ENCODE measurements at regions of chr2 and their contacts with region 1.

Region 1: GRCh38 chr2:165889158-165889557 is 64.4 kb downstream of the TTC21B start:
- DNase-seq: no peak
- ATAC-seq: no peak
- H3K4me3 ChIP-seq: no peak overlapping the region
- H3K27ac ChIP-seq: no peak overlapping the region
- H3K4me1 ChIP-seq: no peaks in the 10 kb centered on the region
- H3K27me3 ChIP-seq: no peaks in the 10 kb centered on the region
- CTCF ChIP-seq: no peak

Region 2: GRCh38 chr2:165933211-165933610 is 44.1 kb after region 1 on chr2:
- intact Hi-C with region 1: loop called (anchors 5 to 10 kb)
- DNase-seq: no peak
- ATAC-seq: no peak
- H3K4me3 ChIP-seq: no peak overlapping the region
- H3K27ac ChIP-seq: no peak overlapping the region
- H3K4me1 ChIP-seq: no peaks in the 10 kb centered on the region
- H3K27me3 ChIP-seq: no peaks in the 10 kb centered on the region
- CTCF ChIP-seq: no peak

Measured in psoas muscle (tissue), 8 donors.